CD4-positive, alpha-beta T cell (primary cell): ENCODE measurements at regions of chr4 and their contacts with region 1.

Region 1: DNA sequence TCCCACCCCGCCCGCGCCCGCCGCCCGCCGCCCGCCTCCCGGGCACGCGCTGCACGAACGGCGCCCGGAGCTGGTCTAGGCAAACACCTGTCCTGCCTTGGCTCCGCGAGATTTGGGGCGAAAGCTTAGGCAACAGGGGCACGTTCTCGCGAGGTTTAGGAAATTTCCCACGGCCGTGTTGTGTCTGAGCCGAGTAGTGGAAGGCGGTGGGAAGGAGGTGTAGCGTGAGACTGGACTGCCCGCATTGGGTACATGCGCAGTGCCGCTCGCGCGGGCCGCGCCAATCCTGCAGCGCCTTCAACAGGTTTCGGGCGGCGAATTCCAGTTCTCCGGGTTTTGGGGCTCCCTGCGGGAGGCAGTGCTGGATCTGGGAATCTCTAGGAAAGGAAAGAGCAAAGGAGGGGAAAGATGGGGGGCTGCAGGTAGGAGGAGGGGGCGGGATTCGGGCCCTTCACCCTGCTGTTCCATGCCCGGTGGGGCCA is 1.3 kb upstream of the RBPJ start:
- DNase-seq: peak; percentile 93 to 100 (median 95)
- ATAC-seq: peak; percentile 65
- H3K4me3 ChIP-seq: peak overlapping the region; percentile 99
- H3K4me3 Mint-ChIP-seq: peak overlapping the region; percentile 100
- H3K27ac ChIP-seq: peak overlapping the region; percentile 84 to 96
- H3K27ac Mint-ChIP-seq: peak overlapping the region; percentile 99
- H3K4me1 ChIP-seq: peaks cover 36% of the 10 kb centered on the region
- H3K4me1 Mint-ChIP-seq: peaks cover 35% of the 10 kb centered on the region
- H3K27me3 ChIP-seq: no peaks in the 10 kb centered on the region
- H3K27me3 Mint-ChIP-seq: no peaks in the 10 kb centered on the region
- CTCF ChIP-seq: no peak

Region 2: GRCh38 chr4:25159884-25160713 is 1159.4 kb before region 1 on chr4 and contains the start of gene SEPSECS:
- CTCF ChIA-PET with region 1: no interaction called
- POLR2A ChIA-PET with region 1: no interaction called
- intact Hi-C with region 1: loop called in 1 of 2 experiments (anchors 5 kb)
- DNase-seq: peak; percentile 84 to 98 (median 92)
- ATAC-seq: peak; percentile 82
- H3K4me3 ChIP-seq: peak within 1 kb of the TSS; percentile 91
- H3K4me3 Mint-ChIP-seq: peak within 1 kb of the TSS; percentile 93
- H3K27ac ChIP-seq: peak within 1 kb of the TSS; percentile 97 to 98
- H3K27ac Mint-ChIP-seq: peak within 1 kb of the TSS; percentile 96
- H3K4me1 ChIP-seq: peaks cover 26% of the 10 kb centered on the region
- H3K4me1 Mint-ChIP-seq: peaks cover 68% of the 10 kb centered on the region
- H3K27me3 ChIP-seq: no peaks in the 10 kb centered on the region
- H3K27me3 Mint-ChIP-seq: no peaks in the 10 kb centered on the region
- CTCF ChIP-seq: no peak
- total RNA-seq, gene SEPSECS: 18.5 to 18.7 TPM

Region 3: DNA sequence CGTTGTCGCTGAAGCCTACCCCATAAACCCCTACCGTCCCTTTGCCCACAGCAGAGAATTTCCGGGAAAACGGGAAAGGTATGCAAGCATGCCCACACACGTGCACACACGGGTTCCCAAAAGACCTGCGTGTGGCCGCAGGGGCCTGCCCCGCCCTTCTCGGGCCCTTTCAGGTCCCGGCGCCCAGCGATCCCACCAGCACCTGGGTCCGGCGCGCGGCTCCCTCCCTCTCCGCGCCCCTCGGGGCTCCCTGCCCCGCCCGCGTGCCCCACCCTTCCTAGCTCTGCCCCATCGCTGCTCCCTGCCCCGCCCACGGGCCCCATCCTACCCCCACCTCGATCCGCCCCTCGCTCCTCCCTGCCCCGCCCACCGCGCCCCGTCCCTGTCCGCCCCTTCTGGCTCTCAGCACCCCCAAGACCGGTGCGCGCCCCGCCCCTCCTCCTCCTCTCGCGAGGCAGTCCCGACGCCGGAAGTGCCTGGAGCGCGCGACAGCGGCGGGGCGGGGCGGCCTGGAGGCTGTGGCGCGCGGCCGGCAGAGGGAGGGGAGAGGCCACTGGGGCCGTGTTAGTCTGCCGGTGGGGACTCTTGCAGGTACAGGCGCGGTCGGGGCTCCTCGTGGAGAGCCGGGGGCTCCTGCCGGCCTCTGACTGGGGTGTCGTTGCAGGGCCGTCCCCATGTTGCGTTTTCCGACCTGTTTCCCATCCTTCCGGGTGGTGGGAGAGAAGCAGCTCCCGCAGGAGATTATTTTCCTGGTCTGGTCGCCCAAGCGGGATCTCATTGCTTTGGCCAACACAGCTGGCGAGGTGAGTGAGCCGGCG is 942.5 kb before region 1 on chr4 and contains the start of gene ANAPC4:
- CTCF ChIA-PET with region 1: no interaction called
- POLR2A ChIA-PET with region 1: no interaction called
- intact Hi-C with region 1: loop called in 1 of 2 experiments (anchors 10 kb)
- DNase-seq: peak; percentile 95 to 99 (median 97)
- ATAC-seq: peak; percentile 94
- H3K4me3 ChIP-seq: peak within 1 kb of the TSS; percentile 94
- H3K4me3 Mint-ChIP-seq: no peak within 1 kb of the TSS
- H3K27ac ChIP-seq: peak within 1 kb of the TSS; percentile 42 to 48
- H3K27ac Mint-ChIP-seq: peak within 1 kb of the TSS; percentile 81
- H3K4me1 ChIP-seq: peaks cover 34% of the 10 kb centered on the region
- H3K4me1 Mint-ChIP-seq: peaks cover 7% of the 10 kb centered on the region
- H3K27me3 ChIP-seq: no peaks in the 10 kb centered on the region
- H3K27me3 Mint-ChIP-seq: no peaks in the 10 kb centered on the region
- CTCF ChIP-seq: no peak
- total RNA-seq, gene ANAPC4: 24.4 to 26.0 TPM

Region 4: DNA sequence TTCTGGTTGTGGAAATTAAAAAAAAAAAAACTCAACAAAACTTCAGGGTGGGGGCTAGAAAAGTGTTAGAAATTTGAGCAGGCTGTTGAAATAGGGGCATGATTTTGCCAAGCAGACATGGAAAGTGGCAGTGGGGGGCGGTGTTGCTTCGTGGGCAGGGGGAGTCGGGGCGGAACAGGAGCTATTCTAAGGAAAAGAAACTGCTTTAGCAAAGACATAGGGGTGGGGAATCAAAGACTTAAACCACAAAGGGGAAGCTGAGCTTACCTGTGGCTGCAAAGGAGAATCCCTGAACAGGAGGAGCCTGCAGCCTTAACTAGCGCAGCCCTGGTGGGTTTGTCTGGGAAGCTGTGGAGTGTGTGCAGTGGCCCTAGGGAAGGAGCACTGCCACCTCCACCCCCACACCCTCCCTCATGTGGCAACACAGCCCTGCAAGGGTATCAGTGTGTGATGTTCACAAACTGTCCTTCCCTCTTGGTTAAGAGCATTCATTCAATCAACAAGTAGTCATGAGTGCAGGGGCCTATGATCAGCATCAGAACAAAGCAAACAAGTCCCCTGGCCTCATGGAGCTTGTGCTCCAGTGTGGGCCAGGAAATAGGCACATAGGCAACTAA is 477.2 kb before region 1 on chr4:
- CTCF ChIA-PET with region 1: no interaction called
- POLR2A ChIA-PET with region 1: no interaction called
- intact Hi-C with region 1: no loop called
- DNase-seq: peak; percentile 21 to 68 (median 40)
- ATAC-seq: peak; percentile 79
- H3K4me3 ChIP-seq: no peak overlapping the region
- H3K4me3 Mint-ChIP-seq: no peak overlapping the region
- H3K27ac ChIP-seq: no peak overlapping the region
- H3K27ac Mint-ChIP-seq: no peak overlapping the region
- H3K4me1 ChIP-seq: peaks cover 25% of the 10 kb centered on the region
- H3K4me1 Mint-ChIP-seq: peaks cover 40% of the 10 kb centered on the region
- H3K27me3 ChIP-seq: no peaks in the 10 kb centered on the region
- H3K27me3 Mint-ChIP-seq: no peaks in the 10 kb centered on the region
- CTCF ChIP-seq: peak; percentile 49

Region 5: DNA sequence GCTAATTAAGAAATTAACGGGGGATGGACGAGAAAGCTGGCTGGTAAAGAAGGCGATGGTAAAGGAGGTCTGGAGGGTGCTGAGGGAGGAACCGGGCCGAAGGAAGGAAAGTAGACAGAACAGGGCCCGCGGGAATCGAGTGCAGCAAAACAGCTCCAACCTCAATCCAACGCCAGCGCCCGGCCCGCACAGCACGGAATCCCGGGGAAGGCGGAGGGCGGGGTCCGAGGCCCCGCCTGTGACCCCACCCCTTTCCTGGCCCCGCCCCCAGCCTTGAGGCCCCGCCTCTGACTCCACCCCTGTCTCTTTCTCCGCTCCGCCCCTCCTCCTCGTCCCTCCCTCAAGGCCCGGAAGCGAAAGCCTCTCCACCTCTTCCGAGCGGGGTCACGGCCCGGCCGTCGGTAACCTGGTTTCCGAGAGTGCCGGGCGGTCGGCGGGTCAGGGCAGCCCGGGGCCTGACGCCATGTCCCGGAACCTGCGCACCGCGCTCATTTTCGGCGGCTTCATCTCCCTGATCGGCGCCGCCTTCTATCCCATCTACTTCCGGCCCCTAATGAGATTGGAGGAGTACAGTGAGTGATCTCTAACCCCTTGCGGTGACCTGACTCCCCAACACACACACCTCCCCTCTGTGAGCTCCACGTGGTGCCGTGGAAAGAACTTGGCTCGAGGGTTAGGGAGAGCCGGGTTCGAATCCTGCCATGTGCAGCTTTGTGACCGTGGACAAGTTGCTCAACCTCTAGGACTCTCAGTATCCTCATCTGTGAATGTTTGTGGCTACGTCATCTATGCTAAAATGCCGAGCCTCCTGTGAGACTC is 405.4 kb before region 1 on chr4 and contains the start of gene SMIM20:
- CTCF ChIA-PET with region 1: no interaction called
- POLR2A ChIA-PET with region 1: interaction called, 20 read pairs
- intact Hi-C with region 1: loop called (anchors 2 kb)
- DNase-seq: peak; percentile 82 to 96 (median 86)
- ATAC-seq: peak; percentile 89
- H3K4me3 ChIP-seq: peak within 1 kb of the TSS; percentile 92
- H3K4me3 Mint-ChIP-seq: peak within 1 kb of the TSS; percentile 94
- H3K27ac ChIP-seq: peak within 1 kb of the TSS; percentile 79 to 85
- H3K27ac Mint-ChIP-seq: peak within 1 kb of the TSS; percentile 96
- H3K4me1 ChIP-seq: peaks cover 25% of the 10 kb centered on the region
- H3K4me1 Mint-ChIP-seq: peaks cover 26% of the 10 kb centered on the region
- H3K27me3 ChIP-seq: no peaks in the 10 kb centered on the region
- H3K27me3 Mint-ChIP-seq: no peaks in the 10 kb centered on the region
- CTCF ChIP-seq: no peak
- total RNA-seq, gene SMIM20: 7.2 to 9.1 TPM

Region 6: GRCh38 chr4:26050212-26050643 is 269.3 kb before region 1 on chr4:
- CTCF ChIA-PET with region 1: no interaction called
- POLR2A ChIA-PET with region 1: no interaction called
- intact Hi-C with region 1: no loop called
- DNase-seq: peak in 2 of 14 experiments; percentile 18 to 32
- ATAC-seq: no peak
- H3K4me3 ChIP-seq: no peak overlapping the region
- H3K4me3 Mint-ChIP-seq: no peak overlapping the region
- H3K27ac ChIP-seq: no peak overlapping the region
- H3K27ac Mint-ChIP-seq: no peak overlapping the region
- H3K4me1 ChIP-seq: no peaks in the 10 kb centered on the region
- H3K4me1 Mint-ChIP-seq: no peaks in the 10 kb centered on the region
- H3K27me3 ChIP-seq: no peaks in the 10 kb centered on the region
- H3K27me3 Mint-ChIP-seq: peaks cover 7% of the 10 kb centered on the region
- CTCF ChIP-seq: no peak

Region 7: DNA sequence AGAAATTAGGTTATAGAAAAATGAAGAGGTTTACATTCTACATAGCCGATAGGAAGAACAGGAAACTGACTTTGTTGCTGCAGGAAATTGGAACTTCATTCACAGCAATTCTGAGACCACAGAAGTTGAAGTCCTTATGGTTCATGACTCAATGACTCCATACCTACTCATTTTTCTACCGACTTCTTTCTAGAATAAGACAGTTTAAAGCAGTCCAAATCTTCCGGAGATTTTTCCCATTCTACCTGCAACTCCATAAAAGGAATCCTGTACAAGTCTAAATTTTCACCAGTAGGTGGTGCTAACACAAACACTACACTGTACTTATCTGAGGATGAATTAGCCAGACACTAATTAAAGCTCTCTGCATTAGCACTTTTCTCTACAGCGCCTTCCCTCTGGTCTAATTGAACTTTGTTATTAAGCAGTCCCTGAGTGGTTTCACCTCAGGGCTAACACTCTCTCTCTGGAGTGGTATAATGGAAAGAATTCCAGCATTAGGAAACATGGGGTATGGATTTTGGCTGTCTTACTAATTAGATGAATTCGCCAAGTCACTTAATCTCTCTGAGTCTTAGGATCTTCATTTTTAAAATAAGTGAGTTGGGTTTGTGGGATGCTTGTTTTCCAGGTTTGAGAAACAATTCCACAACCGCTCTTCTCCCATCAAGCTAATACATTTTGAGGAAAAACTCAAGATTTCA is 237.6 kb before region 1 on chr4:
- CTCF ChIA-PET with region 1: interaction called, 3 read pairs
- POLR2A ChIA-PET with region 1: interaction called, 10 read pairs
- intact Hi-C with region 1: loop called (anchors 2 to 10 kb)
- DNase-seq: peak in 3 of 14 experiments; percentile 63 to 70 (median 69)
- ATAC-seq: no peak
- H3K4me3 ChIP-seq: no peak overlapping the region
- H3K4me3 Mint-ChIP-seq: no peak overlapping the region
- H3K27ac ChIP-seq: no peak overlapping the region
- H3K27ac Mint-ChIP-seq: no peak overlapping the region
- H3K4me1 ChIP-seq: peaks cover 14% of the 10 kb centered on the region
- H3K4me1 Mint-ChIP-seq: peaks cover 19% of the 10 kb centered on the region
- H3K27me3 ChIP-seq: no peaks in the 10 kb centered on the region
- H3K27me3 Mint-ChIP-seq: peaks cover 7% of the 10 kb centered on the region
- CTCF ChIP-seq: peak; percentile 79

Region 8: GRCh38 chr4:26288355-26288909 is 31.1 kb before region 1 on chr4:
- CTCF ChIA-PET with region 1: no interaction called
- POLR2A ChIA-PET with region 1: no interaction called
- intact Hi-C with region 1: no loop called
- DNase-seq: peak in 4 of 14 experiments; percentile 8 to 70 (median 40)
- ATAC-seq: no peak
- H3K4me3 ChIP-seq: no peak overlapping the region
- H3K4me3 Mint-ChIP-seq: no peak overlapping the region
- H3K27ac ChIP-seq: peak overlapping the region in 1 of 2 donors; percentile 57
- H3K27ac Mint-ChIP-seq: no peak overlapping the region
- H3K4me1 ChIP-seq: no peaks in the 10 kb centered on the region
- H3K4me1 Mint-ChIP-seq: no peaks in the 10 kb centered on the region
- H3K27me3 ChIP-seq: no peaks in the 10 kb centered on the region
- H3K27me3 Mint-ChIP-seq: no peaks in the 10 kb centered on the region
- CTCF ChIP-seq: no peak

Region 9: GRCh38 chr4:26583865-26584652 is 264.6 kb after region 1 on chr4 and contains the start of gene TBC1D19:
- CTCF ChIA-PET with region 1: no interaction called
- POLR2A ChIA-PET with region 1: interaction called, 18 read pairs
- intact Hi-C with region 1: loop called (anchors 5 to 10 kb)
- DNase-seq: peak; percentile 78 to 93 (median 86)
- ATAC-seq: peak; percentile 87
- H3K4me3 ChIP-seq: peak within 1 kb of the TSS; percentile 76
- H3K4me3 Mint-ChIP-seq: peak within 1 kb of the TSS; percentile 96
- H3K27ac ChIP-seq: peak within 1 kb of the TSS; percentile 81 to 85
- H3K27ac Mint-ChIP-seq: peak within 1 kb of the TSS; percentile 95
- H3K4me1 ChIP-seq: peaks cover 11% of the 10 kb centered on the region
- H3K4me1 Mint-ChIP-seq: peaks cover 28% of the 10 kb centered on the region
- H3K27me3 ChIP-seq: no peaks in the 10 kb centered on the region
- H3K27me3 Mint-ChIP-seq: peaks cover 3% of the 10 kb centered on the region
- CTCF ChIP-seq: no peak
- total RNA-seq, gene TBC1D19: 4.0 to 4.8 TPM